Natural killer cell (primary cell): ENCODE measurements at regions of chr4 and their contacts with region 1.

Region 1: GRCh38 chr4:26719954-26720552 is 136.2 kb downstream of the TBC1D19 start:
- DNase-seq: peak in 1 of 2 donors; percentile 13
- ATAC-seq: no peak
- H3K4me3 ChIP-seq: no peak overlapping the region
- H3K4me3 Mint-ChIP-seq: no peak overlapping the region
- H3K27ac ChIP-seq: no peak overlapping the region
- H3K27ac Mint-ChIP-seq: no peak overlapping the region
- H3K4me1 ChIP-seq: peaks cover 15% of the 10 kb centered on the region
- H3K4me1 Mint-ChIP-seq: peaks cover 23 to 30% of the 10 kb centered on the region in 2 donors
- H3K27me3 ChIP-seq: no peaks in the 10 kb centered on the region
- H3K27me3 Mint-ChIP-seq: no peaks in the 10 kb centered on the region
- CTCF ChIP-seq: peak; percentile 60

Region 2: GRCh38 chr4:26320538-26321325 is 399.3 kb before region 1 on chr4 and contains the start of gene RBPJ:
- intact Hi-C with region 1: loop called (anchors 10 kb)
- DNase-seq: peak; percentile 82 to 93
- ATAC-seq: peak; percentile 45 to 52 (median 49)
- H3K4me3 ChIP-seq: peak within 1 kb of the TSS; percentile 96
- H3K4me3 Mint-ChIP-seq: peak within 1 kb of the TSS; percentile 100
- H3K27ac ChIP-seq: peak within 1 kb of the TSS; percentile 95
- H3K27ac Mint-ChIP-seq: peak within 1 kb of the TSS; percentile 92 to 96
- H3K4me1 ChIP-seq: peaks cover 27% of the 10 kb centered on the region
- H3K4me1 Mint-ChIP-seq: peaks cover 39 to 49% of the 10 kb centered on the region in 2 donors
- H3K27me3 ChIP-seq: no peaks in the 10 kb centered on the region
- H3K27me3 Mint-ChIP-seq: peaks cover 0 to 14% of the 10 kb centered on the region in 2 donors
- CTCF ChIP-seq: no peak
- total RNA-seq, gene RBPJ: 46.4 to 53.3 (median 48.8) TPM

Region 3: DNA sequence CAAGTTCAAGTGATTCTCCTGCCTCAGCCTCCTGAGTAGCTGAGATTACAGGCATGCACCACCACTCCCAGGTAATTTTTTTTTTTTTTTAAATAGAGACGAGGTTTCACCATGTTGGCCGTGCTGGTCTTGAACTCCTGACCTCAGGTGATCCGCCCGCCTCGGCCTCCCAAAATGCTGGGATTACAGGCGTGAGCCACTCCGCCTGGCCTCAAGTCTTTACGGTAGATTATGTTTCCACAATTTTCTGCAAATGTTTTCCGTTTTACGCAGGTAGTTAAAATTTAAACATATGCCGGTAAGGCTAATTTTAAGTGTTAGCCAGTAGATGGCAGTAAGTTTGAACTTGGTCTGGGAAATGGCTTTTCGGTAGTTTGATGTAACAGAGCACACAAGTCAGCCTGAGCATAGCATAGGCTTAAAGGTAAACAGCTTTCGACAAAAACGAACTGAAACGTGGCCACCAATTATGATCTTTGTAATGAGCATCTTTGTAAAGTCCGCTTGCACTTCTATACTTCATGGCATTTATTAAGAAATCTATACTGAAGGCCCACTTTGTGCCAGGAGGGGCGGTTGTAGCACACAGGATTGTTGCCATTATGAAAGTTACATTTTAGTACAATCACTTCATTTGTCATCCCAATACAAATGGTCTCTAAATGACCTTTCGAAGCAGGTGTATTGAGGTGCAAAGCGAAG is 260.8 kb before region 1 on chr4:
- intact Hi-C with region 1: loop called (anchors 1 kb)
- DNase-seq: peak in 1 of 2 donors; percentile 62
- ATAC-seq: peak in 2 of 3 donors; percentile 58 to 63
- H3K4me3 ChIP-seq: no peak overlapping the region
- H3K4me3 Mint-ChIP-seq: no peak overlapping the region
- H3K27ac ChIP-seq: no peak overlapping the region
- H3K27ac Mint-ChIP-seq: no peak overlapping the region
- H3K4me1 ChIP-seq: peaks cover 5% of the 10 kb centered on the region
- H3K4me1 Mint-ChIP-seq: peaks cover 5 to 6% of the 10 kb centered on the region in 2 donors
- H3K27me3 ChIP-seq: no peaks in the 10 kb centered on the region
- H3K27me3 Mint-ChIP-seq: peaks cover 0 to 4% of the 10 kb centered on the region in 2 donors
- CTCF ChIP-seq: peak; percentile 53

Region 4: GRCh38 chr4:26583865-26584652 is 136.0 kb before region 1 on chr4 and contains the start of gene TBC1D19:
- intact Hi-C with region 1: loop called (anchors 5 kb)
- DNase-seq: peak; percentile 81 to 93
- ATAC-seq: peak; percentile 90 to 97 (median 94)
- H3K4me3 ChIP-seq: peak within 1 kb of the TSS; percentile 86
- H3K4me3 Mint-ChIP-seq: peak within 1 kb of the TSS; percentile 98
- H3K27ac ChIP-seq: peak within 1 kb of the TSS; percentile 94
- H3K27ac Mint-ChIP-seq: peak within 1 kb of the TSS; percentile 90 to 97
- H3K4me1 ChIP-seq: peaks cover 7% of the 10 kb centered on the region
- H3K4me1 Mint-ChIP-seq: peaks cover 30 to 39% of the 10 kb centered on the region in 2 donors
- H3K27me3 ChIP-seq: no peaks in the 10 kb centered on the region
- H3K27me3 Mint-ChIP-seq: no peaks in the 10 kb centered on the region
- CTCF ChIP-seq: no peak
- total RNA-seq, gene TBC1D19: 13.0 to 21.3 (median 16.8) TPM

Region 5: DNA sequence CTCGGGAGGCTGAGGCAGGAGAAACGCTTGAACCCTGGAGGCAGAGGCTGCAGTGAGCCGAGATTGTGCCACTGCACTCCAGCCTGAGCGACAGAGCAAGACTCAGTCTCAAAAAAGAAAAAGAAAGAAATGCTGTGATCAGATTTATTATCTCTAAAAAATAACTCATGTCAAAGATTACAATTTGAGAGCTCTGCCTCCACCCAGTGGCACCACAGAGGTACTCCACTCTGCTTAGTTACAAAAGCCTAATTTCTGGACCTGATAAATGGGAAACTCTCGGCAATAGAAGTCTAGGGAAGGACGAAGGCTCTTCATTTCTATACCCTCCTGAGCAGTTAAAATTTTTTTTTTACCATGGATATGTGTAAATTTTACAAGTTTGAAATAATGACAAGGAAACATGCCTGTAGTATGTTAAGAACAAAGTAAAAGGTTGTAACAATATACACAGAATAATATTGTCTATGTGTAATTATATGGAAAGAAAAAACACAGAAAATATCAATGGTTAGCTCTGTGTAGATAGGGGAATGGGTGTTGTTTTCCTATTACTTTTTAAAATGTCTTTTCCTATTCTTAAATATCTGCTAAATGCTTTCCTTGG is 290.4 kb after region 1 on chr4:
- intact Hi-C with region 1: loop called (anchors 10 kb)
- DNase-seq: peak; percentile 47 to 79
- ATAC-seq: peak; percentile 76 to 92 (median 88)
- H3K4me3 ChIP-seq: no peak overlapping the region
- H3K4me3 Mint-ChIP-seq: no peak overlapping the region
- H3K27ac ChIP-seq: no peak overlapping the region
- H3K27ac Mint-ChIP-seq: peak overlapping the region; percentile 27 to 43
- H3K4me1 ChIP-seq: peaks cover 2% of the 10 kb centered on the region
- H3K4me1 Mint-ChIP-seq: peaks cover 16 to 18% of the 10 kb centered on the region in 2 donors
- H3K27me3 ChIP-seq: no peaks in the 10 kb centered on the region
- H3K27me3 Mint-ChIP-seq: no peaks in the 10 kb centered on the region
- CTCF ChIP-seq: peak; percentile 98